ENCODE measurements at regions of chr1 and their contacts with region 1.

Region 1: GRCh38 chr1:46036894-46037839 is 95.3 kb downstream of the PIK3R3 start:
- DNase-seq: peak; percentile 77 to 94 (median 86)
- ATAC-seq: peak; percentile 92
- H3K4me3 ChIP-seq: no peak overlapping the region
- H3K27ac ChIP-seq: no peak overlapping the region
- H3K4me1 ChIP-seq: peaks cover 0 to 28% of the 10 kb centered on the region in 2 donors
- H3K27me3 ChIP-seq: no peaks in the 10 kb centered on the region
- CTCF ChIP-seq: peak; percentile 95 to 97

Region 2: DNA sequence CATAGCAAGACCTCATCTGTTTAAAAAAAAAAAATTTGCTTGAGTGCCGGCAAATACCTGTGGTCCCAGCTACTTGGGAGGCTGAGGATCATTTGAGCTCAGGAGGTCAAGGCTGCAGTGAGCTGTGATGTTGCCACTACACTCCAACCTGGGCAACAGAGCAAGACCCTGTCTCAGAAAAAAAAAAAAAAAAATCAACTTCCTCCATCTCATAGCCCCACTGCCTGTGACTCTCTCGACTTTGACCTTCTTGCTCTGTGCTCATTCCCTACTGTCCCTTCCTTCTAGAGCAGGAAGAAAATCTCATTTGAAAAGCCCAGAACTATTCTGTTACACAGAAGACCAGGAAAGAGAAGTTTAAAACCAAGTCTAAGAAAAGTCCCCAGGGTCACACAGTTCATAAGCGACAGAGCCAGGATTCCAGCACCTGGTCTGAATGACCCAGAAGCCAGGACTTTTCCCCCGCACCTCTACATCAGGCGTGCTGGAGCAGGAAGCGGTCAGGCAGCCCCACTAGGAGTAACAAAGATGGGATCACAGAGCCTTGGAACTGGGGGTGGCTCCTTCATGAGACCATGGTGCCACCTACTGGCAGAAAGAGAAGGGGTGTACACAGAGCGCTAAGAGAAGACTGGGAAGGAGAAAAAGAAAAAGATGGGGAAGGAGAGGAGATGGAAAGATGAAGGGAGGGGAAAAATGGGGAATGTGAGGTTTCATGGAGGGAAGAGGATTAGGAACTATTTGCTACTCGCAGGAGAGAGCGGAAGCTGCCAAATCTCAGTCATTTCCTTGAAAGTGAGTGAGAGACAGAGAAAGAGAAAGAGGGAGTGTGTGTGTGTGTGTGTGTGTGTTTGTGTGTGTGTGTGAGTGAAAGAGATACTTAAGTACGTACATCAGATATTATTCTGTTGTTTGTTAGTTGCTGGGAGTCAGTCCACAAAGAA is 142.2 kb after region 1 on chr1:
- intact Hi-C with region 1: loop called in 1 of 2 experiments (anchors 2 kb)
- DNase-seq: peak in 3 of 4 donors; percentile 78 to 92 (median 81)
- ATAC-seq: peak; percentile 87
- H3K4me3 ChIP-seq: no peak overlapping the region
- H3K27ac ChIP-seq: no peak overlapping the region
- H3K4me1 ChIP-seq: peaks cover 22 to 31% of the 10 kb centered on the region in 2 donors
- H3K27me3 ChIP-seq: no peaks in the 10 kb centered on the region
- CTCF ChIP-seq: peak; percentile 82 to 84

Region 3: GRCh38 chr1:46223472-46223943 is 186.3 kb after region 1 on chr1:
- intact Hi-C with region 1: loop called in 1 of 2 experiments (anchors 5 kb)
- DNase-seq: peak in 3 of 4 donors; percentile 42 to 79 (median 63)
- ATAC-seq: peak; percentile 99
- H3K4me3 ChIP-seq: no peak overlapping the region
- H3K27ac ChIP-seq: no peak overlapping the region
- H3K4me1 ChIP-seq: no peaks in the 10 kb centered on the region
- H3K27me3 ChIP-seq: no peaks in the 10 kb centered on the region
- CTCF ChIP-seq: peak; percentile 88 to 90